Left lung (tissue), 14 donors: ENCODE measurements at regions of chr20 and their contacts with region 1.

Region 1: GRCh38 chr20:53578492-53579222 is 15.0 kb downstream of the ZNF217 start:
- DNase-seq: peak in 2 of 4 donors; percentile 87 to 91
- ATAC-seq: peak; percentile 90
- H3K4me3 ChIP-seq: peak overlapping the region in 1 of 2 donors; percentile 28
- H3K27ac ChIP-seq: peak overlapping the region; percentile 63 to 87
- H3K4me1 ChIP-seq: peaks cover 10 to 65% of the 10 kb centered on the region in 2 donors
- H3K27me3 ChIP-seq: no peaks in the 10 kb centered on the region
- CTCF ChIP-seq: peak; percentile 80 to 92

Region 2: GRCh38 chr20:53594068-53595017 is 15.7 kb after region 1 on chr20:
- intact Hi-C with region 1: no loop called
- DNase-seq: peak; percentile 87 to 99 (median 96)
- ATAC-seq: peak; percentile 93
- H3K4me3 ChIP-seq: peak overlapping the region; percentile 64 to 67
- H3K27ac ChIP-seq: peak overlapping the region; percentile 98 to 99
- H3K4me1 ChIP-seq: peaks cover 11 to 35% of the 10 kb centered on the region in 2 donors
- H3K27me3 ChIP-seq: peaks cover 0 to 17% of the 10 kb centered on the region in 2 donors
- CTCF ChIP-seq: peak in 1 of 2 donors; percentile 28

Region 3: DNA sequence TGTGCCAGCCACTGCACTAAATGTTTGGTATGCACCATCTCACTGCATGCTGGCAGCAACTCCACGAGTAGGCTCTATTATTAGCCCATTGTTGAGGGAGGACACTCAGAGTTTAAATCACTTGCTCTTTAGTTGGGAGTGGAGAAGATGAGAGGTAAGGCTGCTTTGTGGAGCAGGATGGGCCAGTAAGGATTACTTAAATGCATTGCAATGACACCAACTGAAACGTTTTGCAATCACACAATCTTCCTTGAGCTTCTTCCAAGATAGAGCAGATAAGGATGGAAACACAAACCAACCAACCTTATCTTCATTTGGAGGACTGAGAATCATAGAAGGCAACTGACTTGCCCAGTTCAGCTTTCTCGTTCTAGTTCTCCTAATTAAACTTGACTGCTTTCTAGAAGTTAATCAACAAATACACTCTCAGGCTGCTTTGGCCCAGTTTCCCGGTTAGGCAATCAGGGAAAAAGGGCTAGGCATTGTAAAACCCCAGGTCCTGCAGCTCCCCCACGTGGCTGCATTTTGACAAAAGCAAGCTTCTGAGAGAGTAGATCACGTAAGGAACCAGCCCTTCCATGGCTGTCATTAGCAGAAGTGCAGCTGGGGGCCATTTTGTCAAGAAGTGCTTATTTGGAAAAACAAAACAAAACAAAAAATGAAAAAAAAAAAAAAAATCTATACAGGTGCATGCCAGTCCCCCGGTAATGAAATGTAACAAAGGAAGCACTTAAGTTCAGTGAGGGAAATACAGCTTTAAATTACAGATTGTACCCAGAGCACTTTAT is 361.1 kb after region 1 on chr20:
- intact Hi-C with region 1: loop called in 1 of 2 experiments (anchors 5 kb)
- DNase-seq: peak; percentile 73 to 93 (median 86)
- ATAC-seq: peak; percentile 95
- H3K4me3 ChIP-seq: no peak overlapping the region
- H3K27ac ChIP-seq: peak overlapping the region; percentile 2 to 68
- H3K4me1 ChIP-seq: peaks cover 17 to 62% of the 10 kb centered on the region in 2 donors
- H3K27me3 ChIP-seq: no peaks in the 10 kb centered on the region
- CTCF ChIP-seq: peak; percentile 64 to 65